Posterior cingulate gyrus (tissue), 11 donors: ENCODE measurements at regions of chr7 and their contacts with region 1.

Region 1: GRCh38 chr7:105402221-105403095 is 13.7 kb upstream of the SRPK2 start:
- DNase-seq: no peak

Region 2: DNA sequence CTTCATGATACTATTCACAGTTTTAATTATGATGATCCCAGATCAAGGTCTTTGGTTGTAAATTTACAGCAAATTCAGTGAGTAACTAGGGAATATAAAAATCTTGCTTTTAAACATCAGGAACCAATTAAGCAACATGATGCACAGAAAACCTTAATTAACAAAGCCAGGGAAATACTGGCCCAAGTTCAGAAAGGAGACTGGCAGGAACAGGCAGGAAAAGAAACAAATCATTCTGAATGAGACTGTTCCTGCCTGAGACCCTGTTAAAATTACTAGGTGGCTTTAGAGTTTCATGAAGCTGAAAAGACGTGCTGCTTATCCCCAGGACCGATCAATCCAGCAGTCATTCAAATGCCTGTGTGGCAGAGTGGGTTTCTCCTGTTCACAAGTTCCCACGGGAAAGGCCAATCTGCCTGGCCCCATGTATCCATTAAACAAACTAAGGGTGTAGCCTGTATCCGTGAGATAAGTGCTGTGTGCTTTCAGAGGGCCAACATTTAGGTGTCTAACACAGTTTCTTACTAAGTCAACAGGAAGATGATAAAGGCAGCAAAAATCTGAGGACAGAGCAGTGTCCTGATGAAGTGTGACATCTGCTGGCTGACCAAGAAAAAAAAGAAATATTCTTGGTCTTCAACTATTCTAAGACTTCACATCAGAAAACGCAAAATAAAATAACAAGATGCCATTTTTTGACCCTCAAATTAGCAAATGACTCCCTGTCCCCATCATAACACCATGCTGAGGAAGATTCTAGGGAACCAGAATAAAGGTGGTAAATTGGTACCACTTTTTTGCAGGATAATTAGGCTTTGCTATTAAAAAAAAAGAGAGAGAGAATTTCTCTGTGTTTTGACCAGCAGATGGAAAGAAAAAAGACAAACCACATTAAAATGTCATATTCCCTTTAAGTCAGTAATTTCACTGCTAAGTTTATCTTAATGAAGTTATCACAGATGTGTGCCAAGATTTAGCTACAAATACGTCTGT is 85.4 kb after region 1 on chr7:
- intact Hi-C with region 1: loop called (anchors 5 kb)
- DNase-seq: peak in 2 of 10 donors; percentile 15 to 27

Region 3: DNA sequence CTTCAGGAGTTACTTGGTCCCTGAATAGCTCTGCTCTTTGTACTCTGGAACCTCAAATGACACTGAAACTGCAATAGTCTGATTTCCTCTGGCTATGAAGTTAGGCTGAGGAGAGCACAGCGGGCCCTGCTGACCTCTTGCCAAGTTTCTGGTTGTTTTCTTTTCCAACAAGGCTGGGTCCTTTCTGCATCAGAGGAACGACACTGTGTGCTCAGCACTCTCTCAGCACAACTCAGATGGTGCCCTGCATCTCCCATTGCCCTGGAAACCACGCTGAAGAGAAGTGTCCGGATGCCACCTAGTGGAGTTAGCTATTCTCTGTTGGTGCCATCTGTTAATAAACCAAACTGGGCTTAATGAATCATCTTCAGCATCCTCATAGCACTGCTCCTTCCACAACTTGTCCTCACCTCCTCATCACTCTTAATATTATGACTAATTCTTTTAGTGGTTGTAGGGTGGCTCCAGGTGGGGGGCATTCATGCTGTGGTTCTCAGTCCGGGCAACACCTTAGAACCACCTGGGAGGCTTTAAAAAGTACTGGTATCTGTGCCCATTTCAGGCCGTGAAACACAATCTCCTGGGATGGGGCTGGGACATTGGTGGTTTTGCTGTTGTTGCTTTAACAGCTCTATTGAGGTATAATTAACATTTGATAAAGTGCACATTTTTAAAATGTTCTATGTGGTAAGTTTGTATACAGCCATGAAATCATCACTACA is 187.1 kb after region 1 on chr7:
- intact Hi-C with region 1: loop called (anchors 5 kb)
- DNase-seq: peak; percentile 56 to 96 (median 75)